ENCODE measurements at regions of chr6 and their contacts with region 1.

Region 1: DNA sequence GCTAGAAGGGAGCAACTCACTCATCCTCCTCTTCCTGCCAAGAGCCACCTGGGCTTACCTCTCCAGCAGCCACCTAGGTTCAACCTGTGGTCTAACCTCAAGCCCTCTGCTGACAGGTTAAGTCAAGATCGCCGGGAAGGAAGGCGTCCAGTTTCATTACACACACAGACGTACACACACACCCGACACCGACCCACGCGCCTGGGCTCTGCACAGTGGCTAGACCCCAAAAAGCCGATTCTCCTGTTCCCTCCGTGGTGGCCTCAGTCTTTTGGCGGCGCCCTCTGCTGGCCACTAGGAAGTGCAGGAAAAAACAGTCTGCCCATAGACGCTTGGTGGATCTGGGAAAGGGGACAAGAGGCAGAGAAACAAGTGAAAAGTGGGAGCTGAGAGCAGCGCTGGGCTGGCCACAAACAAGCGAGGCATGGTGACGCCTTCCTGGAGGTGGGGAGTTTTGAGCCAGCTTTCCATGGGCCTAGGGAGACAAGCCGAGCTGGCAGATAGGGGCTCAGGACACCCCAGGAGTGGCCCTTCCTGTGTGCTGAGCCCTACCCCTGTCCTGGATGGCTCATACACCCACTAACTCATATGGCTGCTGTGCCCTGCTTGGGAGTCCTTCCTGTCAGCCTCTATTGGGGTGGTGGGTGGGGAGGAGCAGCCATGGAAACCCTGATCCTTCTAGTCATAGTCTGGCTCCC is 52.7 kb downstream of the MRPL14 start:
- DNase-seq: peak; percentile 51
- H3K4me3 Mint-ChIP-seq: peak overlapping the region; percentile 77
- H3K27ac Mint-ChIP-seq: peak overlapping the region; percentile 30
- H3K4me1 Mint-ChIP-seq: peaks cover 38% of the 10 kb centered on the region
- H3K27me3 Mint-ChIP-seq: peaks cover 17% of the 10 kb centered on the region

Region 2: GRCh38 chr6:43454696-43455530 is 619.7 kb before region 1 on chr6:
- intact Hi-C with region 1: loop called (anchors 10 kb)
- DNase-seq: peak; percentile 60
- H3K4me3 Mint-ChIP-seq: peak overlapping the region; percentile 74
- H3K27ac Mint-ChIP-seq: peak overlapping the region; percentile 34
- H3K4me1 Mint-ChIP-seq: peaks cover 11% of the 10 kb centered on the region
- H3K27me3 Mint-ChIP-seq: peaks cover 30% of the 10 kb centered on the region

Region 3: DNA sequence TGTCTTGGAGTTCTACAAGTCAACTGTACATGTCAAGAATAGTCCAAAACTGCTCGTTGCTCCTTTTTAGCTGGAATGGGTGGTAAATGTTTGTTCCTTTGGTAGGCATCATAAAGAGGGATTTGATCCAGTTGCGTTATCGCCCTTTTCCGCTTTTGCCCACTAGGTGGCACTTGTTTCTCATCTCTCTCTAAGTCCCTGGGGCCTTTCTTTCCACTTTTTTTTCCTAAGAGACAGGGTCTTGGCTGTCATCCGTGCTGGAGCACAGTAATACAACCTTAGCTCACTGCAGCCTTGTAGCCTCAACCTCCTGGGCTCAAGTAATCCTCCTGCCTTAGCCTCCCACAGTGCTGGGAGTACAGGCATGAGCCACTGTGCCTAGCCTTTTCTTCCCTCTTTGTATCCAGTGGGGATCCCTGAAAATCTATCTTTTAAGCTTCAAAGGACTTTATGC is 466.3 kb before region 1 on chr6:
- intact Hi-C with region 1: loop called (anchors 1 kb)
- DNase-seq: no peak
- H3K4me3 Mint-ChIP-seq: no peak overlapping the region
- H3K27ac Mint-ChIP-seq: peak overlapping the region; percentile 18
- H3K4me1 Mint-ChIP-seq: peaks cover 4% of the 10 kb centered on the region
- H3K27me3 Mint-ChIP-seq: no peaks in the 10 kb centered on the region

Region 4: GRCh38 chr6:43667245-43668150 is 407.1 kb before region 1 on chr6:
- intact Hi-C with region 1: loop called (anchors 1 kb)
- DNase-seq: peak; percentile 66
- H3K4me3 Mint-ChIP-seq: peak overlapping the region; percentile 51
- H3K27ac Mint-ChIP-seq: peak overlapping the region; percentile 65
- H3K4me1 Mint-ChIP-seq: peaks cover 49% of the 10 kb centered on the region
- H3K27me3 Mint-ChIP-seq: no peaks in the 10 kb centered on the region

Region 5: GRCh38 chr6:43769526-43770416 is 304.8 kb before region 1 on chr6 and contains the start of gene VEGFA:
- intact Hi-C with region 1: loop called (anchors 1 kb)
- DNase-seq: peak; percentile 83
- H3K4me3 Mint-ChIP-seq: peak within 1 kb of the TSS; percentile 97
- H3K27ac Mint-ChIP-seq: peak within 1 kb of the TSS; percentile 95
- H3K4me1 Mint-ChIP-seq: peaks cover 29% of the 10 kb centered on the region
- H3K27me3 Mint-ChIP-seq: peaks cover 5% of the 10 kb centered on the region
- total RNA-seq, gene VEGFA: 42.3 and 43.2 TPM in 2 replicates

Region 6: DNA sequence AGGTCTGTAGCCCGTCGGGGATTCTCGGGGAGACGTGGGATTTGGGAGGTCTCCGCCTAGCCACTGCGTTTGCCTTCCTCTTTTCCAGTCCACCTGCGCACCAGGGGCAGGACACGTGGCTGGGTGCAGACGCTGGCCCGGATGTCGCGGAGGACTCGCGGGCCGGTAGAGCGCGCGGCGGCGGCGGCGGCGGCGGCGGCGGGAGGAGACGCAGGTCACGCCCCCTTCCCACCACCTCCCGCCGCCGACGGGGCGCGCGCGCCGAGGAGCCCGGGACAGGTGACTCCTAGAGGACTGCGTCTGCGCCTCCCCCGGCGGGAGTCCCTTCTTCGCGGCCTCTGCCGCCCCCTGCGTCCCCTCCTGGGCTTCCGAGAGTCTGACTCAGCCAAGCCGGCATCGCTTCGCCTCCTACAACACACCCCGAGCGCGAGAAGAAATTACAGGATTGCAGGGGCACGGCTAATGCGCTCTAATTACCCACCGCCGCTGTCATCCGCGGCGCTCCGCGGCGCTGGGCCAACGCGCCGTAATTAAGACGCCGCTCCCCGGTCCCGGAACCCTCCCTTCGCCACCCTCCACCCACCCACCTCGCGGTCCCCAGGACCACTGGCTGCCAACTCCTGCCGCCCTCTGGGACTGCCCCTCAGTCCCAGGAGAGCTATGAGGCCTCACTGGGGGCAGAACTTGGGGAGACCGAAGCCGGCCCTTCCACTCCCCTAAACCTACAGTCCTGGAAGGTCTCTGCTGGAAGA is 71.8 kb before region 1 on chr6:
- intact Hi-C with region 1: loop called (anchors 2 kb)
- DNase-seq: peak; percentile 48
- H3K4me3 Mint-ChIP-seq: peak overlapping the region; percentile 63
- H3K27ac Mint-ChIP-seq: no peak overlapping the region
- H3K4me1 Mint-ChIP-seq: peaks cover 6% of the 10 kb centered on the region
- H3K27me3 Mint-ChIP-seq: peaks cover 37% of the 10 kb centered on the region

Region 7: DNA sequence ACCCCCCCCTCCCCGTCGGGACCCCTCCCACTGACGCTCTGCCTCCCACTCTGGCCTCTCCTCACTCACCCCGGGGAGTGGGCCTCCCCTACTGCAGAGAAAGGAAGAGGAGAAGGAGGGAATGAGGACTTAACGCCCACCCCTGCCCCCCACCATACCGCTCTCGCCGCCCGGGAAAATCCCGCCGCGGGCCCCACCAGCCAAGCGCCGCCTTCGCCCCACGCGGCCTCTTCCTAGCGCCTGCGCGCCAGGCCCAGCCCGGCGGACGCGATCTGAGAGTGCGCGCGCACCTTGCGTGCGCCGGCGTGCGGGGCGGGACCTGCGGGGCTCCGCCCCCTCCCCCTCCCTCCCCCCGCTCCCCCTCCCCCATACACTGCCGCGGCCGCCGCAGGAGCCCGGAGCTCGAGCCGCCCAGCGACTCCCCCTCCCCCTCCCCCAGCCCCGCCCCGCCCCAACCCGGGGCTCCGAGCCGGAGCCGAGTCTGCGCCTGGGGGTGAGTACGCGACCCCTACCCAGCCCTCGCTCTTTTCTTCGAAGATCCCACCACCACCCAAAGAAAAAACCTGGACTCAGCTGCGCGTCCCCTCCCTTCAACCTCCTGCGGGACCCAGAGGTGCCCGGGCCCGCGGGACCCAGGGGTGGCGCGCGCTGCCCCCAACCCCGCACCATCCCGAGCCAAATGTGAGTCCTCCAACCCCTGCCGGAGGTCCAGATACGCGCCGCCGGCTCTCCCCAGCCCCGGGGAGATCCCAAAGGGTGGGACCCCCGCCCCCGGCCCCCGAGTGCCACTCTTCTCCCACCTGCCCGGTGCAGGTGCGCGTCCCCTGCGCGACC is 52.8 kb after region 1 on chr6 and contains the starts of genes MRPL14 and TMEM63B:
- intact Hi-C with region 1: loop called (anchors 2 kb)
- DNase-seq: peak; percentile 89
- H3K4me3 Mint-ChIP-seq: peak within 1 kb of the TSS; percentile 90
- H3K27ac Mint-ChIP-seq: peak within 1 kb of the TSS; percentile 94
- H3K4me1 Mint-ChIP-seq: peaks cover 50% of the 10 kb centered on the region
- H3K27me3 Mint-ChIP-seq: no peaks in the 10 kb centered on the region
- total RNA-seq, gene MRPL14: 62.6 and 68.6 TPM in 2 replicates
- total RNA-seq, gene TMEM63B: 17.0 and 20.7 TPM in 2 replicates

Measured in activated T-helper 1 cell treated with anti-CD3 and anti-CD28 coated beads, Interleukin-12 subunit alpha, Interleukin-12 subunit beta, Interleukin-2, Interleukin-4 antibody, amounts not matched to agents 30 ng/mL and 10 ng/mL and 1 ng/mL, durations not matched to agents 14 hours and 24 hours and 36 hours (primary cell).